ENCODE measurements at regions of chr13 and their contacts with region 1.

Region 1: GRCh38 chr13:32019612-32020233 is 11.9 kb upstream of the FRY start:
- DNase-seq: peak; percentile 30 to 59 (median 42)
- H3K4me3 ChIP-seq: no peak overlapping the region
- H3K27ac ChIP-seq: no peak overlapping the region
- H3K4me1 ChIP-seq: no peaks in the 10 kb centered on the region
- H3K27me3 ChIP-seq: no peaks in the 10 kb centered on the region
- CTCF ChIP-seq: peak; percentile 22 to 62 (median 56)
- EP300 ChIP-seq: no peak
- POLR2A ChIP-seq: no peak

Region 2: GRCh38 chr13:31835932-31836331 is 183.8 kb before region 1 on chr13:
- intact Hi-C with region 1: no loop called
- DNase-seq: no peak
- H3K4me3 ChIP-seq: no peak overlapping the region
- H3K27ac ChIP-seq: no peak overlapping the region
- H3K4me1 ChIP-seq: no peaks in the 10 kb centered on the region
- H3K27me3 ChIP-seq: no peaks in the 10 kb centered on the region
- CTCF ChIP-seq: no peak
- EP300 ChIP-seq: no peak
- POLR2A ChIP-seq: no peak

Region 3: GRCh38 chr13:32310134-32310706 is 290.5 kb after region 1 on chr13:
- intact Hi-C with region 1: loop called in 3 of 4 experiments (anchors 1 to 10 kb)
- DNase-seq: no peak
- H3K4me3 ChIP-seq: peak overlapping the region; percentile 11
- H3K27ac ChIP-seq: no peak overlapping the region
- H3K4me1 ChIP-seq: peaks cover 5% of the 10 kb centered on the region
- H3K27me3 ChIP-seq: no peaks in the 10 kb centered on the region
- CTCF ChIP-seq: peak; percentile 55 to 75 (median 69)
- EP300 ChIP-seq: no peak
- POLR2A ChIP-seq: no peak

Region 4: DNA sequence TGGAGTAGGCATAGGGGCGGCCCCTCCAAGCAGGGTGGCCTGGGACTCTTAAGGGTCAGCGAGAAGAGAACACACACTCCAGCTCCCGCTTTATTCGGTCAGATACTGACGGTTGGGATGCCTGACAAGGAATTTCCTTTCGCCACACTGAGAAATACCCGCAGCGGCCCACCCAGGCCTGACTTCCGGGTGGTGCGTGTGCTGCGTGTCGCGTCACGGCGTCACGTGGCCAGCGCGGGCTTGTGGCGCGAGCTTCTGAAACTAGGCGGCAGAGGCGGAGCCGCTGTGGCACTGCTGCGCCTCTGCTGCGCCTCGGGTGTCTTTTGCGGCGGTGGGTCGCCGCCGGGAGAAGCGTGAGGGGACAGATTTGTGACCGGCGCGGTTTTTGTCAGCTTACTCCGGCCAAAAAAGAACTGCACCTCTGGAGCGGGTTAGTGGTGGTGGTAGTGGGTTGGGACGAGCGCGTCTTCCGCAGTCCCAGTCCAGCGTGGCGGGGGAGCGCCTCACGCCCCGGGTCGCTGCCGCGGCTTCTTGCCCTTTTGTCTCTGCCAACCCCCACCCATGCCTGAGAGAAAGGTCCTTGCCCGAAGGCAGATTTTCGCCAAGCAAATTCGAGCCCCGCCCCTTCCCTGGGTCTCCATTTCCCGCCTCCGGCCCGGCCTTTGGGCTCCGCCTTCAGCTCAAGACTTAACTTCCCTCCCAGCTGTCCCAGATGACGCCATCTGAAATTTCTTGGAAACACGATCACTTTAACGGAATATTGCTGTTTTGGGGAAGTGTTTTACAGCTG is 295.7 kb after region 1 on chr13 and contains the starts of genes BRCA2 and ZAR1L:
- intact Hi-C with region 1: loop called in 2 of 4 experiments (anchors 1 to 10 kb)
- DNase-seq: peak; percentile 79 to 92 (median 87)
- H3K4me3 ChIP-seq: peak within 1 kb of the TSS; percentile 77
- H3K27ac ChIP-seq: peak within 1 kb of the TSS; percentile 45 to 87
- H3K4me1 ChIP-seq: peaks cover 5% of the 10 kb centered on the region
- H3K27me3 ChIP-seq: no peaks in the 10 kb centered on the region
- CTCF ChIP-seq: no peak
- EP300 ChIP-seq: no peak
- POLR2A ChIP-seq: peak; percentile 34
- total RNA-seq, gene BRCA2: 0.36 to 3.3 (median 1.00) TPM
- total RNA-seq, gene ZAR1L: not detected

Region 5: DNA sequence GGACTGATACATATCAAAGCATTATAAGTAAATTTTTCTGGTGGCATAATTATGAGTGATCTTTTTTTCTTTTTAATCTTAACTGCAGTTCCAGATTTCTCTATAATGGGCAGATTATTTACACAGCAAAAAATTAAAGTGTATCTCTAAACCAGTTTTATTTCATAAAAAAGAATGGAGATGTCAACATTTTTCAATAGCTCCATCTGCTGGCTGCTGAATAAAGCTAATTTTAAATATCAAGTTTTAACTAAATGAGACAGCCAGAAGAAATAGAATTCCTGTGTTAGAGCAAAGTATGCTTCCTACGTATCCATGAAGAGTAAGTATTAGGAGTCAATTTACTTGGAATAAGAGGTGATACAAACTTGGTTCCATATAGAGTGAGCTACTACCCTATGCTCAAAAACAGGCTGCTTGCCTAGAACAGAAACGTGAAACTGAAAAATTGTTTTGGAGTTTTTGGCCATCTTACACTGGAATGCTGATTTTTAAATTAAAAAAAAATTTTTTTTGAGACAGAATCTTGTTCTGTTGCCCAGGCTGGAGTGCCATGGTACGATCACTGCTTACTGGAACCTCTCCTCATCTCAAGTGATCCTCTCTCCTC is 561.6 kb after region 1 on chr13:
- intact Hi-C with region 1: loop called in 1 of 4 experiments (anchors 5 kb)
- DNase-seq: no peak
- H3K4me3 ChIP-seq: no peak overlapping the region
- H3K27ac ChIP-seq: no peak overlapping the region
- H3K4me1 ChIP-seq: peaks cover 2% of the 10 kb centered on the region
- H3K27me3 ChIP-seq: no peaks in the 10 kb centered on the region
- CTCF ChIP-seq: no peak
- EP300 ChIP-seq: no peak
- POLR2A ChIP-seq: no peak

Measured in ovary (tissue), 10 donors.